ENCODE measurements at regions of chr17 and their contacts with region 1.

Region 1: GRCh38 chr17:50478391-50479381 is at the start of gene RSAD1:
- DNase-seq: peak; percentile 88 to 94 (median 89)
- ATAC-seq: peak; percentile 61 to 93 (median 83)
- H3K4me3 ChIP-seq: peak within 1 kb of the TSS; percentile 47 to 96 (median 83)
- H3K27ac ChIP-seq: peak within 1 kb of the TSS; percentile 2 to 93 (median 86)
- H3K4me1 ChIP-seq: peaks cover 0 to 51% (median 32%) of the 10 kb centered on the region in 12 donors
- H3K27me3 ChIP-seq: no peaks in the 10 kb centered on the region
- CTCF ChIP-seq: peak; percentile 80 to 98 (median 96)
- POLR2A ChIP-seq: peak in 1 of 2 donors; percentile 92
- total RNA-seq, gene RSAD1: 30.9 to 50.0 (median 42.8) TPM

Region 2: DNA sequence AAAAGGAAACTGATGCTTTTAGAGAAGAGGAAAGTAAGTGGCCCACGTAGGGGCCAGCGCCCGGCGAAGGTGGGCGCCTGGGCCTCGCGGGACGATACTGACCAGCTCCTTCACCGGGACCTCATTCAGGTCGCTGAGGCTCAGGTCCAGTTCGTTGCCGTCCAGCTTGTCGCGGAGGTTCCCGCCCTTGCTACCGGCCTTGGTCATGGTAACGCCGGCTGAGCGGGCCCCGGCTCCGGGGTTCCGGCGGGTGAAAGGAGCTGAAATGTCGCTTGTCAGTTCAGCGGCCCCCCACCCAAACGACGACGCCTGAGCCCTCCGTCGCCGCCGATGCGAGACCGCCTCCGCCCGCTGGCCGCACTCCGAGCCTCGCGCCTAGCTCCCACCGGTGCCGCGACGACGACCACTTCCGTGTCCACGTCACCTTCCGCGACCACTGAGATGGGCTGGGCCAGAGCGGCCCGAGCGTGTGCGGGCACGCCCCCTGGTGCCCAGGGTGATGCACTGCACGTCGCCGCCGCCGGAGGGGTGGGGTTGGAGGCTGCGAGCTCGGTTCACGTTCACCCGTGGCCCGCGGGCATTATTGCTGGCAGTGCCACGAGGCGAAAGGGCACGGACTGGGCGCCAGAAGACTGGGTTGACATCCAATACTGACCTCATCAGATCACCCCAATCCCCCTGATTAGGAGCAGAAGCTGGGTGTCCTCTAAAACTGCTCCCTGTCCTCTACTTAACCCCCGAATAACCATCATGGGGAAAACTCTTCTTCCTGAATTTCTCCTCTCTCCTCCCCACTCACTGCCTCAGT is 81.4 kb before region 1 on chr17 and contains the start of gene LRRC59:
- intact Hi-C with region 1: loop called in 1 of 10 experiments (anchors 5 kb)
- DNase-seq: peak; percentile 87 to 96 (median 92)
- ATAC-seq: peak; percentile 92 to 98 (median 98)
- H3K4me3 ChIP-seq: peak within 1 kb of the TSS; percentile 71 to 99 (median 86)
- H3K27ac ChIP-seq: peak within 1 kb of the TSS in 11 of 12 donors; percentile 50 to 89 (median 81)
- H3K4me1 ChIP-seq: peaks cover 0 to 29% (median 20%) of the 10 kb centered on the region in 12 donors
- H3K27me3 ChIP-seq: no peaks in the 10 kb centered on the region
- CTCF ChIP-seq: peak; percentile 94 to 100 (median 98)
- POLR2A ChIP-seq: peak in 1 of 2 donors; percentile 77
- total RNA-seq, gene LRRC59: 19.6 to 50.9 (median 28.6) TPM

Region 3: GRCh38 chr17:50501054-50501453 is 22.4 kb after region 1 on chr17:
- intact Hi-C with region 1: no loop called
- DNase-seq: no peak
- ATAC-seq: no peak
- H3K4me3 ChIP-seq: no peak overlapping the region
- H3K27ac ChIP-seq: no peak overlapping the region
- H3K4me1 ChIP-seq: no peaks in the 10 kb centered on the region
- H3K27me3 ChIP-seq: no peaks in the 10 kb centered on the region
- CTCF ChIP-seq: peak; percentile 17 to 50 (median 32)
- POLR2A ChIP-seq: no peak

Region 4: DNA sequence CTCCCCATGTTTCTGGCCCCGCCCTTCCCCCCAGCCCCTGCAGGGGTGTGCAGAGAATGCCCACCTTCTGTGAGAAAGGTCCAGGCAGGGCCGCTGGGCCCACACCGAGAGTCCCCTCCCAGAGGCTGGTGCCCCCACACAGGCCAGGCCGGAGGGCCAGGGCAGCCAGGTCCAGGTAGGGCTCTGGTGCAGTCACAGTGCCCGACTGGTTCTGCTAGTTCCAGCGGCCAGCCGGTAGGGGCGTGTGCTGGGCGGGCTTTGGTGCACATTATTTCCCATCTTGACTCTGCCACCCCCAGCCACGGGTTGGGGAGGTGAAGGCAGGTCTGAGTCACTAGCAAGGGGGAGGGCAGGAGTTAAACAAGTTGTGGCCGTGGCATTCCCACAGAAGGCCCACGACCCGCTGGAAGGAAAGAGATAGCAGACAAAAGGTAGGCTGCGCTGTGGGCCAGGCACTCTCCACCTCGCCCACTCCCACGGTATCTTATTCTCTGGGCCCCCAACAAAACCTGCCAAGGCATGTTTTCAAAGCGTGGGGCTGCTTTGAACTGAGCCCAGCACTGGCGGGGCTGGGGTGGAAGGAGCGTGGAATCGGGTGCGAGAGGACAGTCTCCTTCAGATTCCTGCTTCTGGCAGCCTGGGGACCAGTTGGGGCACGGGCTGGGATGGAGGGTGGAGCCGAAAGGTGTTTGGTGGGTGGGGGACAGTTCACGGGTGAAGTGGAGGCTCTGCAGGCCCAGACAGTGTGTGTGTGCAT is 55.7 kb after region 1 on chr17:
- intact Hi-C with region 1: loop called in 2 of 10 experiments (anchors 1 to 2 kb)
- DNase-seq: no peak
- ATAC-seq: peak; percentile 45 to 75 (median 60)
- H3K4me3 ChIP-seq: peak overlapping the region in 11 of 12 donors; percentile 16 to 72 (median 51)
- H3K27ac ChIP-seq: peak overlapping the region; percentile 16 to 94 (median 76)
- H3K4me1 ChIP-seq: peaks cover 0 to 41% (median 10%) of the 10 kb centered on the region in 12 donors
- H3K27me3 ChIP-seq: peaks cover 0 to 40% (median 22%) of the 10 kb centered on the region in 9 donors
- CTCF ChIP-seq: peak in 8 of 12 donors; percentile 8 to 42 (median 28)
- POLR2A ChIP-seq: no peak

Region 5: GRCh38 chr17:50626037-50626574 is 147.4 kb after region 1 on chr17:
- intact Hi-C with region 1: loop called in 8 of 10 experiments (anchors 1 to 10 kb)
- DNase-seq: peak; percentile 71 to 82 (median 77)
- ATAC-seq: peak; percentile 48 to 86 (median 82)
- H3K4me3 ChIP-seq: no peak overlapping the region
- H3K27ac ChIP-seq: no peak overlapping the region
- H3K4me1 ChIP-seq: peaks cover 0 to 19% (median 4%) of the 10 kb centered on the region in 12 donors
- H3K27me3 ChIP-seq: peaks cover 0 to 39% (median 9%) of the 10 kb centered on the region in 9 donors
- CTCF ChIP-seq: peak; percentile 74 to 88 (median 80)
- POLR2A ChIP-seq: no peak

Region 6: GRCh38 chr17:50686494-50687199 is 208.0 kb after region 1 on chr17:
- intact Hi-C with region 1: loop called in 3 of 10 experiments (anchors 5 to 10 kb)
- DNase-seq: peak in 3 of 5 donors; percentile 43 to 82 (median 63)
- ATAC-seq: peak; percentile 76 to 88 (median 82)
- H3K4me3 ChIP-seq: no peak overlapping the region
- H3K27ac ChIP-seq: peak overlapping the region in 8 of 12 donors; percentile 2 to 82 (median 46)
- H3K4me1 ChIP-seq: peaks cover 0 to 23% (median 11%) of the 10 kb centered on the region in 12 donors
- H3K27me3 ChIP-seq: no peaks in the 10 kb centered on the region
- CTCF ChIP-seq: no peak
- POLR2A ChIP-seq: no peak